GM12878 (cell line): ENCODE measurements at regions of chr6 and their contacts with region 1.

Region 1: GRCh38 chr6:124870611-124871459 is 91.4 kb upstream of the RNF217 start:
- DNase-seq: no peak
- ATAC-seq: no peak
- H3K4me3 ChIP-seq: no peak overlapping the region
- H3K27ac ChIP-seq: no peak overlapping the region
- H3K4me1 ChIP-seq: no peaks in the 10 kb centered on the region
- H3K27me3 ChIP-seq: no peaks in the 10 kb centered on the region
- CTCF ChIP-seq: peak; percentile 10 to 38 (median 20); a peak in 4 of 6 replicates
- EP300 ChIP-seq: no peak
- POLR2A ChIP-seq: no peak
- RAD21 ChIP-seq: peak; percentile 46

Region 2: GRCh38 chr6:124819346-124819745 is 51.5 kb before region 1 on chr6:
- CTCF ChIA-PET with region 1: no interaction called
- POLR2A ChIA-PET with region 1: no interaction called
- RAD21 ChIA-PET with region 1: no interaction called
- SMC1A ChIA-PET with region 1: no interaction called
- in situ Hi-C with region 1: no loop called
- intact Hi-C with region 1: no loop called
- DNase-seq: no peak
- ATAC-seq: no peak
- H3K4me3 ChIP-seq: no peak overlapping the region
- H3K27ac ChIP-seq: no peak overlapping the region
- H3K4me1 ChIP-seq: no peaks in the 10 kb centered on the region
- H3K27me3 ChIP-seq: no peaks in the 10 kb centered on the region
- CTCF ChIP-seq: no peak
- EP300 ChIP-seq: no peak
- POLR2A ChIP-seq: no peak
- RAD21 ChIP-seq: no peak

Region 3: GRCh38 chr6:124967444-124967843 is 96.6 kb after region 1 on chr6:
- CTCF ChIA-PET with region 1: no interaction called
- POLR2A ChIA-PET with region 1: no interaction called
- RAD21 ChIA-PET with region 1: no interaction called
- SMC1A ChIA-PET with region 1: no interaction called
- in situ Hi-C with region 1: no loop called
- intact Hi-C with region 1: no loop called
- DNase-seq: no peak
- ATAC-seq: no peak
- H3K4me3 ChIP-seq: no peak overlapping the region
- H3K27ac ChIP-seq: no peak overlapping the region
- H3K4me1 ChIP-seq: no peaks in the 10 kb centered on the region
- H3K27me3 ChIP-seq: peaks cover 0 to 3% of the 10 kb centered on the region in 2 experiments; a peak in 2 of 4 replicates
- CTCF ChIP-seq: no peak
- EP300 ChIP-seq: no peak
- POLR2A ChIP-seq: no peak
- RAD21 ChIP-seq: no peak

Region 4: DNA sequence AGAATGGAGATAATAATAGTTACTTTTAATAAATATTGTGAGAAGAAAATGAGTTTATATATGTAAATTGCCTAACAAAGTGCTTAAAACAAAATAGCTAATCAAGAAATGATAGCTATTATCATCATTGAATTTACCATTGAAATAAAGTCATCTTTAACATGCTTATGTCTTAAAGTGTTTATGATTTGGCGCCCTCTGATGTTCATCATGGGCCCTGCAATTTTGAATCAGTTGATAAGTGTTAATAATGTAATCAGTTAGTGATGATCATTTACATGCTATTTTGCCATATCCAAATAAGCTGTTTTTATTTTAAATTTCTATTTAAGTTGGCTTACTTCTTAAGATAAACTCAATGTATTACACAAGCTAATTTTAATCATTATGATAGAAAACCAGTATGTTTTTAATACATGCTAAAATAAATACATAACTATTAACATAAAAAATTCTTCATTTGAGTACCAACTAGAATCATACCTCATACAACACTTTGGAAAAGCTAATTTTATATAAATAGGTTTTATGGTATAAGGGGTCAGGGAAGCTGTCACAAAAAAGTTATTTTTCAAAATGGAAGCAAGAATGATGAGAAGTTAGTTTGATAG is 243.5 kb after region 1 on chr6:
- CTCF ChIA-PET with region 1: interaction called, 24 read pairs
- POLR2A ChIA-PET with region 1: no interaction called
- RAD21 ChIA-PET with region 1: interaction called, 23 read pairs
- SMC1A ChIA-PET with region 1: interaction called, 24 read pairs
- in situ Hi-C with region 1: loop called (anchors 5 kb)
- intact Hi-C with region 1: loop called (anchors 1 kb)
- DNase-seq: no peak
- ATAC-seq: peak; percentile 64; the same call in 2 of the 3 replicates
- H3K4me3 ChIP-seq: no peak overlapping the region
- H3K27ac ChIP-seq: no peak overlapping the region
- H3K4me1 ChIP-seq: no peaks in the 10 kb centered on the region
- H3K27me3 ChIP-seq: no peaks in the 10 kb centered on the region; a peak in 1 of 4 replicates
- CTCF ChIP-seq: peak; percentile 54 to 68 (median 62)
- EP300 ChIP-seq: no peak
- POLR2A ChIP-seq: no peak
- RAD21 ChIP-seq: peak; percentile 53

Region 5: DNA sequence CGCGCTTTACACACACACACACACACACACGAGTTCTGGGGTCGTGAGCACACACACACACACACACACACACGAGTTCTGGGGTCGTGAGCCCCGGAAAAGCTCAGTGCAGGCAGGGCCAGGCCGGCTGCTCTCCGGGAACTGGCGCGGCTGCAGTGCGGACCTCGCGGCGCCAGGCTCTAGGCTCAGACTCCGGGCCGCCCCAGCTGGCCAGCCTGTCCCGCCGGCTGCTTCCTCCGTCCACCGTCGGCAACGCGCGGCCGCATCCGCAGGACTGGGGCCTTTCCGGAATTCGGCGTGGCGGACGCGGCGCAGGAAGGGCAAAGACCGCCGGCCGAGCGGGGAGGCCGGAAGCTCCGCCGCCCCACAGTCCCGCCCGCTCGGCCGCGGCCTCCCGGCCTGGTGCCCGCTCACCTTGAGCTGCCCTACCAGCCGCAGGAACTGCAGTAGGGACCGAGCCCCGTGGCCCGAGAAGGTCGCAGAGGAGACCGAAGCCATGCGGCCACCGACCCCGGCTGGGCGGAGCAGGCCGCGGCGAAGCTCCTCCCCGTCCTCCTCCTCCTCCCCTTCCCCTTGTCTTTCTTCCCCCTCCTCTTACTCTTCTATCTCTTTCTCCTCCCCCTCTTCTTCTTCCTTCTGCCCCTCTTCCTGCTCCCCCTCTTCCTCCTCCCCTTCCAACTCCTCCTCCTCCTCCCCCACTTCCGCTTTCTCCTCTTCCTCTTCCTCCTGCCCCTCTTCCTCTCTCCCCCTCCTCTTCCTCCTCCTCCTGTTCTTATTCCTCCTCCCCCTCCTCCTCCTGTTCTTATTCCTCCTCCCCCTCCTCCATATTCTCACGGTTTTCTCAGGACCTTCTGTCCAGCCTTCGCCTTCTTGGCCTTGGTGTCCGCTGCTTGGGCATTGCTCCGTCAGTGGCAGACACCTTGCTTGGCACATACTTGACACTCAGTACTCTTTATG is 430.9 kb after region 1 on chr6 and contains the start of gene HDDC2:
- CTCF ChIA-PET with region 1: no interaction called
- POLR2A ChIA-PET with region 1: no interaction called
- RAD21 ChIA-PET with region 1: no interaction called
- SMC1A ChIA-PET with region 1: no interaction called
- in situ Hi-C with region 1: no loop called
- intact Hi-C with region 1: loop called (anchors 10 kb)
- DNase-seq: no peak
- ATAC-seq: peak; percentile 88
- H3K4me3 ChIP-seq: peak within 1 kb of the TSS; percentile 74
- H3K27ac ChIP-seq: peak within 1 kb of the TSS; percentile 82
- H3K4me1 ChIP-seq: no peaks in the 10 kb centered on the region
- H3K27me3 ChIP-seq: peaks cover 0 to 3% of the 10 kb centered on the region in 2 experiments; a peak in 1 of 4 replicates
- CTCF ChIP-seq: no peak
- EP300 ChIP-seq: no peak
- POLR2A ChIP-seq: peak; percentile 84
- RAD21 ChIP-seq: no peak
- polyA plus RNA-seq, gene HDDC2: 132 to 134 TPM